Activated CD4-positive, alpha-beta T cell treated with anti-CD3 and anti-CD28 coated beads, Interleukin-2, amount 10 ng/mL, durations not matched to agents 24 days and 14 days (primary cell): ENCODE measurements at regions of chr12 and their contacts with region 1.

Region 1: DNA sequence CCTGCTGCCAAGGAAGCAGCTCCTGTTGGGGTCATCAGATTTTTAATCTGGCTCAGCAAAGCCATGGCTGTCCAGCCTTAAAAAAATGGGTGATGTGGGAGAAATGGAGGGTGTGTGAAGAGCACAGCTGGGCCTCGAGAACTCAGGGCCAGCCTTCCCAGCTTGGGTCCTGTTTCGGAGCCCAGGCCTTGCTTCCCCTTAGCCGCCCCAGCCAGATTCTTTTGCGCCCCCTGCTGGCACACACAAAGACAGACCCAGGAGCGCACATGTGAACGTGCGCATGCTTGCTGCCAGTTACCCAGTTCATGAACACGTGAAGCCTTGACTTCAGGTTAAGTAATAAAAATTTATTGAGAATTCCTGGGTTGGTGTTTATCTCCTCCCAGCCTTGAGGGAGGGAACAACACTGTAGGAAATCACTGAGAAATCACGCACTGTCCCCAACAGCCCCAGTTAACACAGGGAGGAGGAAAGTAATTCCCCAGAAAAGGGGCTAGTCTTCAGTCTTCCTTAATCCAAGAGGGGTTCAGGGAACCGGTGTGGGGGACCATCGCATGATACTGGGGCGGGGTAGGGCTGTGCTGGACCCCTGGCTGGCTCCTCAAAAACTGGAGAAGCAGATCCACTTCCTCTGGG is 5.3 kb downstream of the PHB2 start:
- DNase-seq: peak; percentile 96
- H3K4me3 Mint-ChIP-seq: peak overlapping the region; percentile 28
- H3K27ac Mint-ChIP-seq: peak overlapping the region; percentile 94
- H3K4me1 Mint-ChIP-seq: peaks cover 50% of the 10 kb centered on the region
- H3K27me3 Mint-ChIP-seq: no peaks in the 10 kb centered on the region

Region 2: GRCh38 chr12:6766651-6767349 is 198.3 kb before region 1 on chr12:
- intact Hi-C with region 1: no loop called
- DNase-seq: peak; percentile 92
- H3K4me3 Mint-ChIP-seq: peak overlapping the region; percentile 86
- H3K27ac Mint-ChIP-seq: peak overlapping the region; percentile 86
- H3K4me1 Mint-ChIP-seq: peaks cover 57% of the 10 kb centered on the region
- H3K27me3 Mint-ChIP-seq: peaks cover 7% of the 10 kb centered on the region

Region 3: DNA sequence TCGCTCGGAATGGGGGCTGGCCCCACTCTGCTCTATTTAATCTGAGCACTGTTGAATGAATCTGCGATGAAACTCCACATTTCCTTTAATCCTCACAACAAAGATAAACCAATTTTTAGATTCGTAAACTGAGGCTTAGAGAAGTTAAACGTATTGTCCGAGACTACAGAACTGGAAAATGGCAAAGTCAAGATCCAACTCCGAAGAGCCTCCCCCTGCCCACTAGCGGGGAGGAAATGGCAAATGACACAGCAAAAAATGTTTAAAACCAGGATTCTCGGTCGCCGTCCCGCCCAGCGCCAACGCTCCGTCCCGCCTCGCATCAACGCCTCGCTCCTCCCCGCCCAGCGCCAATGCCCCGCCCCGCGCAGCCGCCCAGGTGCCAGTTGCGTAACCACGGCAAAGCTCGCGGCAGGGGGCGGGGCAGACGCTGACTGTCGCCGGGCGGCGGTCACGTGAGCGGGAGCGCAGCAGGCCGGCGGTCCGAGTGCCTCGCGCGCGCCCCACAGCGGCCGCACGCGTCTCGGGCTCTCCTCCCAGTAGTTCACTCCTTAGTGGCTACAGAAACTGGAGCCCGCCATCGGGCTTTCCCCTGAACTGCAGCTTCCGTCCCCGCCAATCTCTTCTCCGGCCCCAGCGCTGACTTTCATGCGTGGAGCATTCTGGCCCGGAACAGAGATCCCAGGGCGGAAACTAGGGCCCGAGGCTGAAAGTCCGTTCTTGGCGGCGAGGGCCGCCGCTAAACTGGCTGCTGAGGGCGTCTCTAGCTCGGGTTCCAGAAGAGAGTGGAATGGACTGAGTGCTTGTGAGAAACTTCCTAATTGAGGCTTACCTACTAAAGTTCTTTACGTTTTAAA is 74.1 kb before region 1 on chr12:
- intact Hi-C with region 1: loop called (anchors 2 kb)
- DNase-seq: peak; percentile 100
- H3K4me3 Mint-ChIP-seq: peak overlapping the region; percentile 83
- H3K27ac Mint-ChIP-seq: peak overlapping the region; percentile 97
- H3K4me1 Mint-ChIP-seq: peaks cover 21% of the 10 kb centered on the region
- H3K27me3 Mint-ChIP-seq: no peaks in the 10 kb centered on the region

Region 4: DNA sequence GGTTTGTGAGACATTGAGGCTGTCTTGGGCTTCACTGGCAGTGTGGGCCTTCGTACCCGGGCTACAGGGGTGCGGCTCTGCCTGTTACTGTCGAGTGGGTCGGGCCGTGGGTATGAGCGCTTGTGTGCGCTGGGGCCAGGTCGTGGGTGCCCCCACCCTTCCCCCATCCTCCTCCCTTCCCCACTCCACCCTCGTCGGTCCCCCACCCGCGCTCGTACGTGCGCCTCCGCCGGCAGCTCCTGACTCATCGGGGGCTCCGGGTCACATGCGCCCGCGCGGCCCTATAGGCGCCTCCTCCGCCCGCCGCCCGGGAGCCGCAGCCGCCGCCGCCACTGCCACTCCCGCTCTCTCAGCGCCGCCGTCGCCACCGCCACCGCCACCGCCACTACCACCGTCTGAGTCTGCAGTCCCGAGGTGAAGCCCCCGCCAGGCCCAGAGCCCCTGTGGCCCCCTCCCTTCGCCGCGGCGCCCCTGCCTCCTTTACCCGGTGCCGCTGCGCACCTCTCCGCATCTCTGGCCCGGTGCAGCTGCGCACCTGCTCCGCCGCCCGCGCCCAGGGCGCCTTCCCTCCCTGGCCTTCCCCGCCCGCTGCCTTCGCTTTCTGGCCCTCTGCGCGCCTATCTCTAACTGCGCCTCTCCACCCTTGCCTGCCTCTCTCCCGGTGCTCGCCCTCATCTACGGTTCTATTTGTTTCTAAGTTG is 50.7 kb before region 1 on chr12 and contains the start of gene ENO2:
- intact Hi-C with region 1: loop called (anchors 2 kb)
- DNase-seq: peak; percentile 94
- H3K4me3 Mint-ChIP-seq: peak within 1 kb of the TSS; percentile 99
- H3K27ac Mint-ChIP-seq: peak within 1 kb of the TSS; percentile 94
- H3K4me1 Mint-ChIP-seq: peaks cover 40% of the 10 kb centered on the region
- H3K27me3 Mint-ChIP-seq: no peaks in the 10 kb centered on the region
- total RNA-seq, gene ENO2: 202 and 206 TPM in 2 replicates

Region 5: DNA sequence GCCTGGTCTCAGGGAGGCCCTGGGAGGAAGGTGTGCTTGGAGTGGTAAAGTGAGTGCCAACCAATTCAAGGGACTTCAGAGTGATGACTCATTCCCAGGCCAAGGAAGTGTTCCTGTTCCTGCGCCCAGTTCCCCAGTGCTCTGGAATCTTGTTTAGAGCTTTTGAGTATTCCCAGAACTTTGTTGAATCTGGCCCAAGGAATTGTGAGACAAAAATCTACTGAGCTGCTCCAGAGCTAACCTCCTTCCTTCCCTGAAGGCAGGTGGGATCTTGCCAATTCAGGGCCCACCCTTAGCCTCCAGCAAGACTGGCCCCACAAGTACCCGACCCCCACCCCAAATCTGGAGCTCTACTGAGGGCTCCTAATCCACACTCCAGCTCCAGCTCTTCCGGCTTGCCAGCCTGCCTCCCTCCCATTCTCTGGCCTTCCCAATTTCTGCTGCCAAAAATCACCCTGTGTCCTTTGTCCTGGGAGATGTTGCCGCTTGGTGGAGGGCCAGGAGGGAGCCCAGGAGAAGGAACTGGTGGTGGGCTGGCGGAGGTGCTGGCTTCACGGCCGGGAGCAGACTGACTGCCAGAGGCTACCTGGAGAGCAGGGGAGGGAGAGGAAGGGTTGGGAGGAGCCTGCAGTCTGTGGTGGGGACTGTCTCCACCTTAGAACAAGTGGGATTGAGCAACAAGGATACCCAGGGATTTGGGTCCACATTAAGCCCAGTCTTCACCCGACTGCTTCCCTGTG is 39.4 kb before region 1 on chr12:
- intact Hi-C with region 1: loop called (anchors 1 kb)
- DNase-seq: no peak
- H3K4me3 Mint-ChIP-seq: peak overlapping the region; percentile 97
- H3K27ac Mint-ChIP-seq: peak overlapping the region; percentile 59
- H3K4me1 Mint-ChIP-seq: peaks cover 52% of the 10 kb centered on the region
- H3K27me3 Mint-ChIP-seq: no peaks in the 10 kb centered on the region

Region 6: GRCh38 chr12:6944381-6945186 is 20.6 kb before region 1 on chr12:
- intact Hi-C with region 1: loop called (anchors 1 kb)
- DNase-seq: peak; percentile 96
- H3K4me3 Mint-ChIP-seq: peak overlapping the region; percentile 93
- H3K27ac Mint-ChIP-seq: peak overlapping the region; percentile 98
- H3K4me1 Mint-ChIP-seq: peaks cover 62% of the 10 kb centered on the region
- H3K27me3 Mint-ChIP-seq: no peaks in the 10 kb centered on the region

Region 7: DNA sequence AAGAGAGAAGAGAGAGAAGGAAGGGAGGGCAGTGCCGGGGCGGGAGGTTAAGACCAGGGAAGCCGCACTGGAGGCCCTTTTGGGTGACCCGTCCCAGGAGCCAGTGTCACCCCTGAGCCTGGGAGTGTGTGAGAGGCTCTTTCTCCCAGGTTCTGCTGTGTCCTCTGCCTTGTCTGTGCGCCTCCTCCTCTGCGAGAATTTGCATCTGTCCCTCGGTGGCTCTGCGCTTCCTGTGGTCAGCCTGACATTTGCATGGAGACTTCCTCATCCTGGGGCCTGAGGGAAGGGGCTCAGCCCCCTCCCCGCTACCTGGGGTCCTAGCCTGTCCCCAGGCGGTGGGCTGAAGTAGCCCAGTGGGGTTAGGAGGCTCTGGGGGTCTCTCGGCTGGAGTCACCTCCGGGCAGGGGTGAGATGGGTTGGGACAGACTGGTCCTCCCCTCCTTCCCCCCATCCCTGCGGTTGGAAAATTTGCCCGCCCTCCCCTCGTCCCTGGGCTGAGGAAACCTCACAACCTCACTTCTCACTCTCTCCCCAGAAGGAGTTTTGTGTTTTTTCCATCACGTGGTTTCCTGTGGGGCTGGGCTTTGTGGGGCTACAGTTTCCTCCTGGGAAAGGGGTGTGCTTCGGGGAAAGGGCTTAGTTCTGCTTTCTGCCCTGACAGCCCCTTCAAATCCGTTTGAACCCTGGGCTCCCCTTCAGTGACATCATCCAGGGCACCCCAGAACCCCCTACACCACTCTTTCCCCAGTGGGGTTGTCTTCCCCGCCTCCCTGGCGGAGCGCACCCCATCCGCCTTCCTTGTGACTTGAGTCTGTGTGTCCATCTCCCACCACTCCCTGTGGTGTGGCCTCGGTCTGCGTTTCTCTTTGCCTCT is 11.5 kb before region 1 on chr12:
- intact Hi-C with region 1: loop called (anchors 1 kb)
- DNase-seq: peak; percentile 96
- H3K4me3 Mint-ChIP-seq: peak overlapping the region; percentile 96
- H3K27ac Mint-ChIP-seq: peak overlapping the region; percentile 96
- H3K4me1 Mint-ChIP-seq: peaks cover 71% of the 10 kb centered on the region
- H3K27me3 Mint-ChIP-seq: no peaks in the 10 kb centered on the region

Region 8: DNA sequence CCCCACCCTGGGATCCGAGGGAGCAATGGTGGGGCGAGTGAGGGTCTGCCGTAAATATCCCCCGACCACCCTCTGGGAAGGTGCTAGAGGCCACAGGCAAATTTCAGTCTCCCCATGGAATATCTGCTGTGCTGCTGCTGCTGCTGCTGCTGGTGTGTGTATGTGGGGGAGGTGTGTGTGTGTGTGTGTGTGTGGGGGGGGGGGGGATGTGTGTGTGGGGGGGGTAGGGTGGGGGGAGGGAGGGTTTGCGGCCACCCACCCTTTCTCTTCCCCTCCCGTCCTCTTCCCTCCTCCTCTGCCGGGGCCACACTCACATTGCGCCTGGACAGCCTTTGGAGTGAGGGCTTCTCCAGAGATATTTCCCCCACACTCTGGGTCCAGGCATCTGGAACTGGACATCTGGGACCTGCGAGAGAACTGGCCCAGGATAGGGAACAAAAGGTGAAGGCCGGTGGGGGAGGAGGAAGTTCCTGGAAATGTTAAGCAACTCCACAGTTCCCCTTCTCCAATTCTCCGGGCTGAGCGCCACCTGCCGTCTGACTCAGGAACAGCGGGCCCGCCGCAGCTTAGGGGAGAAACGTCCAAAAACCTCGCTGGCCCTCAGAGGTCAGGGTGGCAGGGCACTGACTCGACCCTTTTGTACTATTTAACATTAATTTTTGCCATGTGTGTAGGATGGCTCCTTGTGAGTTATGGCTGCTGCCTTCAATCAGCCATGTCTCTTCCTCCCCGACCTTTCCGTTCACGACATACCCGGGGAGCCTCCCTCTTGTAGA is 143.8 kb after region 1 on chr12 and contains the start of gene C1RL:
- intact Hi-C with region 1: loop called (anchors 2 kb)
- DNase-seq: peak; percentile 96
- H3K4me3 Mint-ChIP-seq: peak within 1 kb of the TSS; percentile 95
- H3K27ac Mint-ChIP-seq: peak within 1 kb of the TSS; percentile 92
- H3K4me1 Mint-ChIP-seq: peaks cover 42% of the 10 kb centered on the region
- H3K27me3 Mint-ChIP-seq: no peaks in the 10 kb centered on the region
- total RNA-seq, gene C1RL: 19.8 and 23.0 TPM in 2 replicates